ENCODE measurements at regions of chr6 and their contacts with region 1.

Region 1: DNA sequence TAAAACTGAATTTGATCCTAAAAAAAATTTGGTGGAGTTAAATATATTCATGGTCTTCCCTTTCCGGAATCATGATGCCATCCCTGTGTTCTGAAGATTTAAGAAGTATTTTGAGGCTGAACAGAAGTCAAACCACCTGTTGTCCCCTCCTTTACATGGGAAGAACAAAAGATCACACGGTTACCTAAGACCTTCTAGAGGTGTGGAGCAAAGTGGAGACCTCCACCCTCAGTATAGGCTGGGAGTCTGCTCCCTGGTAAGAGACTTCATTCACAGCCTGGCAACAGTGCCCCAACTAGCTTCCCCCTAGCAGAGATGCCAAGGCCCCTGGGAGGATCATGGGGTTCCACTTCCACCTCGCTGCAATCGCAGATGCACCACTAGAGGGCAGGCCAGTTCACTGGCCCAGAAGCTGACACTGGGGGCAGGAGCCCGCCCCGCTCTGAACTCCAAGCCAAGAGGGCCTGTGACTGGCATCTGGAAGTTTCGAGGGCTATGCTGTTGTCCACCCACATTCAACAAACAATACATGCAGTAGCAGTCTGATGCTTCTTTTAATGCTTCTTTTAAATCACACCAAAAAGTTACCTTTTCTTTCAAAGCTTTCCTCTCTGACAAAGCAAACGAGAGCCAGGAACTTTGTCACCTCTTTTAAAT is 19.5 kb upstream of the UBE2J1 start:
- DNase-seq: peak; percentile 55 to 79 (median 68)
- ATAC-seq: peak; percentile 85
- H3K4me3 ChIP-seq: no peak overlapping the region
- H3K4me3 Mint-ChIP-seq: peak overlapping the region in 3 of 10 donors; percentile 13 to 49 (median 29)
- H3K27ac ChIP-seq: no peak overlapping the region
- H3K27ac Mint-ChIP-seq: peak overlapping the region in 5 of 9 donors; percentile 39 to 87 (median 59)
- H3K4me1 ChIP-seq: peaks cover 6 to 8% of the 10 kb centered on the region in 2 donors
- H3K4me1 Mint-ChIP-seq: peaks cover 0 to 42% (median 9%) of the 10 kb centered on the region in 7 donors
- H3K27me3 ChIP-seq: no peaks in the 10 kb centered on the region
- H3K27me3 Mint-ChIP-seq: no peaks in the 10 kb centered on the region

Region 2: DNA sequence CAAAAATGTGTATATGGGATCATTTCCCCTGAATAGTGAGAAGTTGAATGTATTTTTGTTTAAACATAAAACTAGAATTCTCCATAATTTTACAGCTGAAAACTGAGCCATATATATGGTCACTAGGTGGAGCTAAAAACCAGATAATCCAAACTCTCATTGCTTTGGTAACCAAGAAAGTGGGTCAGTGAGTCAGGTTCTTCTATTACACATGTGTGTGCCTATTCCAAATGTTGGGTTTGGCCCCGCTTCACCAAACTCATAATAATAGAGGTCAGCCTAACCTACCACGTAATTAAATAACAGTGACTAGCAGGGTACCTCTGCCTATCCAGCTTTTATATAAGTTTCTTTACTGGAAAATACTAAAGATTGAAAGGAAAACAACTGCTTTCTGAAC is 389.3 kb before region 1 on chr6:
- CTCF ChIA-PET with region 1: interaction called, 13 read pairs
- POLR2A ChIA-PET with region 1: no interaction called
- intact Hi-C with region 1: loop called (anchors 1 kb)
- DNase-seq: peak in 7 of 9 donors; percentile 29 to 62 (median 55)
- ATAC-seq: peak; percentile 94
- H3K4me3 ChIP-seq: no peak overlapping the region
- H3K4me3 Mint-ChIP-seq: no peak overlapping the region
- H3K27ac ChIP-seq: no peak overlapping the region
- H3K27ac Mint-ChIP-seq: no peak overlapping the region
- H3K4me1 ChIP-seq: no peaks in the 10 kb centered on the region
- H3K4me1 Mint-ChIP-seq: peaks cover 0 to 7% (median 0%) of the 10 kb centered on the region in 7 donors
- H3K27me3 ChIP-seq: no peaks in the 10 kb centered on the region
- H3K27me3 Mint-ChIP-seq: peaks cover 0 to 23% (median 0%) of the 10 kb centered on the region in 5 donors

Region 3: GRCh38 chr6:89281779-89282246 is 90.2 kb before region 1 on chr6:
- CTCF ChIA-PET with region 1: no interaction called
- POLR2A ChIA-PET with region 1: no interaction called
- intact Hi-C with region 1: loop called in 1 of 2 experiments (anchors 5 kb)
- DNase-seq: peak in 2 of 9 donors; percentile 9 to 35
- ATAC-seq: peak; percentile 87
- H3K4me3 ChIP-seq: no peak overlapping the region
- H3K4me3 Mint-ChIP-seq: no peak overlapping the region
- H3K27ac ChIP-seq: no peak overlapping the region
- H3K27ac Mint-ChIP-seq: no peak overlapping the region
- H3K4me1 ChIP-seq: no peaks in the 10 kb centered on the region
- H3K4me1 Mint-ChIP-seq: peaks cover 0 to 7% (median 0%) of the 10 kb centered on the region in 7 donors
- H3K27me3 ChIP-seq: no peaks in the 10 kb centered on the region
- H3K27me3 Mint-ChIP-seq: peaks cover 0 to 9% (median 0%) of the 10 kb centered on the region in 5 donors

Region 4: GRCh38 chr6:89352278-89353117 is 19.5 kb before region 1 on chr6 and contains the start of gene UBE2J1:
- CTCF ChIA-PET with region 1: interaction called, 16 read pairs
- POLR2A ChIA-PET with region 1: interaction called, 23 read pairs
- intact Hi-C with region 1: loop called (anchors 1 kb)
- DNase-seq: peak; percentile 34 to 87 (median 61)
- ATAC-seq: peak; percentile 89
- H3K4me3 ChIP-seq: peak within 1 kb of the TSS; percentile 67
- H3K4me3 Mint-ChIP-seq: peak within 1 kb of the TSS; percentile 96 to 100 (median 98)
- H3K27ac ChIP-seq: peak within 1 kb of the TSS; percentile 88
- H3K27ac Mint-ChIP-seq: peak within 1 kb of the TSS; percentile 95 to 98 (median 97)
- H3K4me1 ChIP-seq: peaks cover 27 to 30% of the 10 kb centered on the region in 2 donors
- H3K4me1 Mint-ChIP-seq: peaks cover 44 to 81% (median 72%) of the 10 kb centered on the region in 7 donors
- H3K27me3 ChIP-seq: no peaks in the 10 kb centered on the region
- H3K27me3 Mint-ChIP-seq: no peaks in the 10 kb centered on the region
- total RNA-seq, gene UBE2J1: 18.8 to 47.7 (median 27.7) TPM

Region 5: DNA sequence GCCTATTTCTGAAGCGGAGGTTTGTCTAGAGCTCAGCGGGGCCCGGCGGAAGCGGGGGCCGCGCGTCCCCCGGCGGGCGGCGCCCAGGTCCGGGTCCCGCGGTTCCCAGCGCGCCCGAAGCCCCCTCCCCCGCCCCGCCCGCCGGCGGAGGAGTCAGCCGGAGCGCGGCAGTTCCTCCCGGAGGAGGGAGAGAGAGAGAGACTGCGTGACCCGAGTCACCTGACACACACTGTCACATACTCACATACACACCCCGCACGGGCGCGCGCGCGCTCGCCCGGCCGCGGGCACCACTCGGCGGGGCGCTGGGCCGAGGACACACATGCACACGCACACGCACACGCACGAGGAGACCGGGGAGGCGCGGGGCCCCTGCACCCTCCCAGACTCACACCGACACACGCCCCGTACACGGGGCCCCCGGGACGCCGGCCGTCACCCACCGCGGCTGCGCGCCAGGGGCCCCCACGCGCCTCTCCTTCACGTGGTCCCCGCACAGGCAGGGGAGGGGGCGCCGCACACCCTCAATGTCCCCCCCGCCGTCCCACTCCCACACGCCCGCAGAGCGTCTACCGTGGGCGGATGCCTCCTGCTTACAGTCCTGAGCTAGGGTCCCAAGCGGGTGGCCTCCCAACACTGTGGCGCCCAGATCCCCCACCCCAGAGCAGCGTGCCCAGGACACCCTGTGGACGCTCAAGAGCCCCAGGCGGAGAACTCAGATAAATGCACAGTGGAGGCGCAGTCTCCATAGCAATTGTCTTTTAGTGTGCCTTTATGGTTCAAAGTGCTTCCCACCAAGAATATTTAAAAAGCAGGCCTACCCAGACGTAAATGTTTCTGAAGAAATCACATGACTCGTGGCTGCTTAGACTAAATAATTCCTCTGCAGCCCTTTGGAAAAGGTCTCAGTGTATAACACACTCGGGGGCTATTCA is 40.4 kb after region 1 on chr6 and contains the start of gene RRAGD:
- CTCF ChIA-PET with region 1: interaction called, 5 read pairs
- POLR2A ChIA-PET with region 1: interaction called, 4 read pairs
- intact Hi-C with region 1: loop called (anchors 1 kb)
- DNase-seq: peak; percentile 51 to 69 (median 61)
- ATAC-seq: peak; percentile 90
- H3K4me3 ChIP-seq: peak within 1 kb of the TSS; percentile 79
- H3K4me3 Mint-ChIP-seq: peak within 1 kb of the TSS; percentile 87 to 100 (median 97)
- H3K27ac ChIP-seq: peak within 1 kb of the TSS; percentile 57
- H3K27ac Mint-ChIP-seq: peak within 1 kb of the TSS; percentile 53 to 98 (median 88)
- H3K4me1 ChIP-seq: peaks cover 8% of the 10 kb centered on the region in 2 donors
- H3K4me1 Mint-ChIP-seq: peaks cover 2 to 24% (median 19%) of the 10 kb centered on the region in 7 donors
- H3K27me3 ChIP-seq: no peaks in the 10 kb centered on the region
- H3K27me3 Mint-ChIP-seq: peaks cover 6 to 64% (median 18%) of the 10 kb centered on the region in 5 donors
- total RNA-seq, gene RRAGD: 7.3 to 12.1 (median 9.6) TPM

Region 6: GRCh38 chr6:89494131-89494796 is 122.3 kb after region 1 on chr6:
- CTCF ChIA-PET with region 1: no interaction called
- POLR2A ChIA-PET with region 1: no interaction called
- intact Hi-C with region 1: no loop called
- DNase-seq: no peak
- ATAC-seq: no peak
- H3K4me3 ChIP-seq: no peak overlapping the region
- H3K4me3 Mint-ChIP-seq: no peak overlapping the region
- H3K27ac ChIP-seq: no peak overlapping the region
- H3K27ac Mint-ChIP-seq: no peak overlapping the region
- H3K4me1 ChIP-seq: no peaks in the 10 kb centered on the region
- H3K4me1 Mint-ChIP-seq: peaks cover 0 to 5% (median 0%) of the 10 kb centered on the region in 7 donors
- H3K27me3 ChIP-seq: no peaks in the 10 kb centered on the region
- H3K27me3 Mint-ChIP-seq: peaks cover 0 to 22% (median 0%) of the 10 kb centered on the region in 5 donors

Region 7: GRCh38 chr6:89610149-89610642 is 238.2 kb after region 1 on chr6:
- CTCF ChIA-PET with region 1: interaction called, 10 read pairs
- POLR2A ChIA-PET with region 1: interaction called, 6 read pairs
- intact Hi-C with region 1: loop called (anchors 1 kb)
- DNase-seq: peak; percentile 34 to 75 (median 65)
- ATAC-seq: peak; percentile 91
- H3K4me3 ChIP-seq: no peak overlapping the region
- H3K4me3 Mint-ChIP-seq: no peak overlapping the region
- H3K27ac ChIP-seq: no peak overlapping the region
- H3K27ac Mint-ChIP-seq: no peak overlapping the region
- H3K4me1 ChIP-seq: no peaks in the 10 kb centered on the region
- H3K4me1 Mint-ChIP-seq: peaks cover 0 to 17% (median 0%) of the 10 kb centered on the region in 7 donors
- H3K27me3 ChIP-seq: no peaks in the 10 kb centered on the region
- H3K27me3 Mint-ChIP-seq: no peaks in the 10 kb centered on the region

Measured in naive thymus-derived CD4-positive, alpha-beta T cell (primary cell).